ENCODE measurements at regions of chr12 and their contacts with region 1.

Region 1: DNA sequence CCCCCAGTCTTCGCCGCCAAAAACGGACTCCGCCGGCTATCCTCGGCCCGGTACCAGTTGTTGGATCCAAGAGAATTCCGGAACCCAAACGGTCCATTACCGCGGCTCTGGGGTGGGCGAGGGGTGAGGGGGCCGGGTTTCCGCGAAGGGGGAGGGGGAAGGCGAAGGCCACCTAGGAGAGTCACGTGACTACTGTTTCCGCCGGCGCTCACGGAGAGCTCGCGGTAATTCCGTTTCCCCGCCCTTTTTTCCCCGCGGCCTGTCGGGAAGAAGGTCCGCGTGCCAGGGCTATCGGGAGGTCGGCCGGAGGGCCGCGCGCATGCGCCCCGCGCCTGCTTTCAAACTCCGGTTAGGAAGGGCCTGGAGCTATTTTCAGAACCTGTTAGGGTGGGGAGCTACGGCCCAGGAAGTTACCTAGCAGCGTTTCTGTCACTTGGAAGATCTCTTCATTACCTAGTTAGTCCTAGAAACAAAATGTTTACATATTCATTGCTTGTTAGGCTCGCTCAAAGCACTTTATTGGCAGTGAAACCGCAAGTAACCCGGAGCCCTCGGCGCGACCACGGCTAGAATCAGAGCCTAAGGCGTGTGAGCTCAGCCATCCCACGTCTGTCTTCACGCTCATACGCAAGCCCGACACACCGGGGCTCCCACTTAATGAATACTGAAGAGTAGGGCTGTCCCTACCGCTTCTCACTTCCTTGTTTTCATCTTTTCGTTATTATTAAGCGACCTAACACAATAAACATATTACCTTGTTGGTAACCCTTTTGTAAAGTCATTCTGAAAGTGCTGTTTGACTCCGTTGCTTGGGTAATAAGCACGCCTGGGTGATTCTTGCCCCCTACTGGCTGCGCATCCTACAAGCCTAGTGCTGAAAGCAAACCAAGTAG is 624 bp upstream of the SBNO1 start:
- DNase-seq: peak; percentile 98
- ATAC-seq: peak; percentile 79
- H3K4me3 Mint-ChIP-seq: peak overlapping the region; percentile 79
- H3K27ac Mint-ChIP-seq: peak overlapping the region; percentile 96
- H3K4me1 Mint-ChIP-seq: peaks cover 12% of the 10 kb centered on the region
- H3K27me3 Mint-ChIP-seq: no peaks in the 10 kb centered on the region; the same call in 1 of the 2 replicates
- CTCF ChIP-seq: peak; percentile 32; the same call in 1 of the 2 replicates

Region 2: DNA sequence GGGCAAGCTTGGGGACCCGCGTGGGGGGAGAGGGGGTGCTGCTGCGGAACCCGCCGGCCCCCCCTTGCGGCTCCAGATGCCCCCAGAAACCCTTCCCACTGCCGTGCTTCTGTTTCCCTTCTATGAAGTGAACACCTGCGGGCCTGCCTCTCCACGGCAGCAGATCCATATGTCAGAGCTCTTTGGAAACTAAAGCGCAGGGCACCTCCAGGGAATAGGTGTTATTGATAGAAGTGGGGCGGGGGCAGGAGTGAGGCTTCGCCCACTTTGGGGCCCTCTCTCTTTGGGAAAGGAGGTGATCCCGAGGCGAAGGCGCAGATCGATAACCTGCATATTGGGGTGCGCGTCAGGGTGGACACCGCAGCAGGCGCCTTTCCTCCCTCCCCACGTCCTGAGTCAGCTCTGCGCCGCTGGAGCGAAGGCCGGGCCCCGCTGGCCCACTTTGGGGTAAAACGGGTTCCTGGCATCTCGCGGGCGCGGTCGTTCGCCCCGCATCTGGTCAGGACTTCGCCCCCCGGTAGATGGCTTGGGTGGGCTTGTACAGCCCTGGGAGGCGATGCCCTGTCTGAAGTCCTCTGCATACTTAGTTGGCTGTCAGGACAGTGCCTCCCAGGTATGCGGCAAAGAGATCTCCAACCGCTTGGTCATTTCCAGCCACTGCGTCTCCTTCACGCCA is 19.2 kb after region 1 on chr12:
- CTCF ChIA-PET with region 1: interaction called, 47 read pairs
- POLR2A ChIA-PET with region 1: interaction called, 32 read pairs
- DNase-seq: peak; percentile 22
- ATAC-seq: no peak
- H3K4me3 Mint-ChIP-seq: peak overlapping the region; percentile 86
- H3K27ac Mint-ChIP-seq: no peak overlapping the region
- H3K4me1 Mint-ChIP-seq: peaks cover 14% of the 10 kb centered on the region
- H3K27me3 Mint-ChIP-seq: peaks cover 24% of the 10 kb centered on the region
- CTCF ChIP-seq: no peak

Region 3: GRCh38 chr12:123421314-123421713 is 56.0 kb after region 1 on chr12:
- CTCF ChIA-PET with region 1: interaction called, 10 read pairs
- POLR2A ChIA-PET with region 1: no interaction called
- DNase-seq: no peak
- ATAC-seq: peak; percentile 30; the same call in 1 of the 2 replicates
- H3K4me3 Mint-ChIP-seq: no peak overlapping the region
- H3K27ac Mint-ChIP-seq: no peak overlapping the region
- H3K4me1 Mint-ChIP-seq: no peaks in the 10 kb centered on the region
- H3K27me3 Mint-ChIP-seq: no peaks in the 10 kb centered on the region; the same call in 1 of the 2 replicates
- CTCF ChIP-seq: no peak

Region 4: GRCh38 chr12:123580772-123581171 is 215.5 kb after region 1 on chr12:
- CTCF ChIA-PET with region 1: interaction called, 11 read pairs
- POLR2A ChIA-PET with region 1: interaction called, 9 read pairs
- DNase-seq: no peak
- ATAC-seq: no peak
- H3K4me3 Mint-ChIP-seq: no peak overlapping the region
- H3K27ac Mint-ChIP-seq: no peak overlapping the region
- H3K4me1 Mint-ChIP-seq: peaks cover 15% of the 10 kb centered on the region
- H3K27me3 Mint-ChIP-seq: no peaks in the 10 kb centered on the region
- CTCF ChIP-seq: no peak

Region 5: GRCh38 chr12:123696646-123697045 is 331.4 kb after region 1 on chr12:
- CTCF ChIA-PET with region 1: no interaction called
- POLR2A ChIA-PET with region 1: no interaction called
- DNase-seq: no peak
- ATAC-seq: no peak
- H3K4me3 Mint-ChIP-seq: no peak overlapping the region
- H3K27ac Mint-ChIP-seq: no peak overlapping the region
- H3K4me1 Mint-ChIP-seq: no peaks in the 10 kb centered on the region
- H3K27me3 Mint-ChIP-seq: no peaks in the 10 kb centered on the region
- CTCF ChIP-seq: no peak